ENCODE measurements at regions of chr14 and their contacts with region 1.

Region 1: GRCh38 chr14:55707365-55707804 is 127.4 kb downstream of the KTN1 start:
- H3K4me3 Mint-ChIP-seq: no peak overlapping the region
- H3K27ac Mint-ChIP-seq: no peak overlapping the region
- H3K4me1 Mint-ChIP-seq: peaks cover 20% of the 10 kb centered on the region
- H3K27me3 Mint-ChIP-seq: no peaks in the 10 kb centered on the region

Region 2: DNA sequence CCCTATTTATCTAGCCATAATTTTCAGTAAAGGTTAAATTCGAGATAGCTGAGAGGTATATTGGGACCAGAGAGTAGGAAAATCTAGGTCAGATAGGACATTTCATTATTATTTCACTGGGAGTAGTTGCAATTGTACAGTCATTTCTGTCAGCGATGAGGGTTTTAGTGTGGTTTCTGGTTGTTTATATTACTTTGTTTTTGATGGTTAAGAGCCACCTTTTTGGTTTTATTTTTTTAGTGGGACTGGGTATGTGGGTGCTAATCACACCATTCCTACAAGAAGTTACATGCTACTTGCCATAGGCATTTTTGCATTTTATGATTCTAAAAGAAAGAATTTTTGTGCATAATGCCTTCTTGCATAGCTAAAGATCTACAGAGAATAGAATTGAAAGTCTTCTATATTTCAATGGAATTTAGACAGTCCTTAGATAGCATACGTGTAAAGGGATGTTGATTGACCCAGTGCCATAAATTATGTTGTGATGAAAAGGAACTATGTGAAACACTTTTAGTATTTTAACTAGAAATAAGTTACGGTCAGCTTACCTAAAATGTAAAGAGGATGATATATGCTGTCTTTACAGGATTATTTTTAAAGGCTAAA is 42.2 kb before region 1 on chr14:
- intact Hi-C with region 1: no loop called
- H3K4me3 Mint-ChIP-seq: no peak overlapping the region
- H3K27ac Mint-ChIP-seq: no peak overlapping the region
- H3K4me1 Mint-ChIP-seq: no peaks in the 10 kb centered on the region
- H3K27me3 Mint-ChIP-seq: no peaks in the 10 kb centered on the region

Region 3: GRCh38 chr14:55689981-55690863 is 17.2 kb before region 1 on chr14:
- intact Hi-C with region 1: no loop called
- H3K4me3 Mint-ChIP-seq: no peak overlapping the region
- H3K27ac Mint-ChIP-seq: no peak overlapping the region
- H3K4me1 Mint-ChIP-seq: no peaks in the 10 kb centered on the region
- H3K27me3 Mint-ChIP-seq: no peaks in the 10 kb centered on the region

Region 4: GRCh38 chr14:55864890-55865655 is 157.7 kb after region 1 on chr14:
- intact Hi-C with region 1: no loop called
- H3K4me3 Mint-ChIP-seq: no peak overlapping the region
- H3K27ac Mint-ChIP-seq: no peak overlapping the region
- H3K4me1 Mint-ChIP-seq: peaks cover 25% of the 10 kb centered on the region
- H3K27me3 Mint-ChIP-seq: no peaks in the 10 kb centered on the region

Region 5: GRCh38 chr14:55986069-55986468 is 278.7 kb after region 1 on chr14:
- intact Hi-C with region 1: no loop called
- H3K4me3 Mint-ChIP-seq: no peak overlapping the region
- H3K27ac Mint-ChIP-seq: no peak overlapping the region
- H3K4me1 Mint-ChIP-seq: no peaks in the 10 kb centered on the region
- H3K27me3 Mint-ChIP-seq: peaks cover 3% of the 10 kb centered on the region

Region 6: DNA sequence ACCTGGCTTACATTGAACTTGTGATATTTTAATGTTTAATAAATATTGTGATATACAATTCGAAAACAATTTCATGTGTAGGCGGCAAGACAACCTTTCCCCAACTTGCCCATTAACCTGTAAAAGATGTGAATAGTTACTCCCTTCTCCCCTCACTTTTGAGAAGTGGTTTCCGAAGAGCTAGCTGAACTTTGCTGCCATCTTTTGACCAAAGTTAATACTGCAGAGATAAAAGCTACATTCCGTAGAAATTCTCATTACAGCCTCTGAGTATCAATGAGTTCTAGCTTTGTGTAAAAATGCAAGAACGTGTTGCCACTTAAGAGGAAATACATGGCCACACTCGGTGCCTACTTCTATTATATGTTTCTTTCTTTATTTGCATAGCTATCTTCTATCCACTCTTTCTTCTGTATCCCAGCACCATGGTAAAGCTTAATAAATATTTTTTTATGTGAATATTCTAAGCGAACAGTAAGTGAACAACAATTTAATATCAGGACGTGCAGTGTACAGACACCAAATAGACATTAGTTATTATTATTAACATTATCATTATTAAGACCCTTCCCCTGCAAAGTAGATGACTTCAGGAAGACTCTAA is 767.1 kb after region 1 on chr14:
- intact Hi-C with region 1: loop called (anchors 5 kb)
- H3K4me3 Mint-ChIP-seq: no peak overlapping the region
- H3K27ac Mint-ChIP-seq: no peak overlapping the region
- H3K4me1 Mint-ChIP-seq: no peaks in the 10 kb centered on the region
- H3K27me3 Mint-ChIP-seq: peaks cover 3% of the 10 kb centered on the region

Measured in dendritic cell treated with granulocyte-macrophage colony-stimulating factor and Interleukin-4, amounts not matched to agents 40 ng/mL and 50 ng/mL, for 4 days (primary cell).